Heart left ventricle (tissue), 16 donors: ENCODE measurements at regions of chr20 and their contacts with region 1.

Region 1: DNA sequence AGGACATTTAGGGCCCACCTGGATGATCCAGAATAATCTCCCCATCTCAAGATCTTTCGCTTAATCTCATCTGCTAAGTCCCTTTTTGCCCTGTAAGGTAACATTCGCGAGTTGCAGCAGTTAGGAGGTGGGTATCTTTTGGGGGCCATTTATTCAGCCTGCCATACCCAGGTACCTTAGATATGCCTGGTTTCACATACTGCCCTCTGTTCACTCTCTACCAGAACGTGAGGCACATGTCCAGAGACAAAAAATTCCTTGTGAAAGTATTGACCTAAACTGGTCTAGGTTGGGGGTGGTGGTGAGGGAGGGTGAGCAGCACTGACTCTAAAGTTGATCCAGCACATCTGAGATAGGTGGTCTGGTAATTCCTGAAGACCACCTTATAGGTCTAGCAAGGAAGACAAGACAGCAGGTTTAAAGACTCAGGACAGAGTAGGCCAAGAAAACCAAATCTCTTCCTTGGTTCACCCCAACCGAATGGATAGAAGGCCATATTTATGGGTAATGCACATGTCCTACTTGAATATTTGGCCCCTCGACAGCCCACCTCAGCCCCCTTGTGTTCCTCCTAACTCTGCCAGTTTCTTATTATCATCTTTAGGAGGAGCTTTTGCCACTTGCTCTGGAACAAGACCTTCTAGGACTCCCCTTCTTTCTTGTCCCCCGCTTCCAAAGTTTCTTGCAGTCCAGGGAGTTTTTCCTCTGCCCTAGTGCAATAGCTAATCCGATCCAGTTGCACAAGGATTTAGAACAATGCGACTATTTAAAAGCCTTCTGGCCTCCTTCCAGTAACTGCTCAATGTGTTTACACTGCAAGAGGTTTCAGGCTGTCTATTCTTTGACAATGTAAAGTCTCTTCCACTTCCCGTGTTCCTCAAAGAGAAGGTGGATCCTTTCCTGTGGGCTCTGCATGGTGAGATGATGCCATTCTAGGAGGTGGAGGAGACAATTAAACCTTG is 213.0 kb upstream of the LAMP5 start:
- DNase-seq: peak in 3 of 5 donors; percentile 18 to 34 (median 26)
- ATAC-seq: peak; percentile 73 to 88 (median 76)
- H3K4me3 ChIP-seq: no peak overlapping the region
- H3K27ac ChIP-seq: peak overlapping the region in 10 of 12 donors; percentile 1 to 54 (median 32)
- H3K4me1 ChIP-seq: peaks cover 0 to 32% (median 18%) of the 10 kb centered on the region in 12 donors
- H3K27me3 ChIP-seq: no peaks in the 10 kb centered on the region
- CTCF ChIP-seq: no peak
- POLR2A ChIP-seq: no peak

Region 2: GRCh38 chr20:9093218-9093957 is 208.0 kb before region 1 on chr20:
- intact Hi-C with region 1: no loop called
- DNase-seq: no peak
- ATAC-seq: peak in 3 of 4 donors; percentile 46 to 80 (median 52)
- H3K4me3 ChIP-seq: peak overlapping the region in 7 of 12 donors; percentile 4 to 28 (median 14)
- H3K27ac ChIP-seq: peak overlapping the region; percentile 33 to 78 (median 66)
- H3K4me1 ChIP-seq: peaks cover 0 to 71% (median 40%) of the 10 kb centered on the region in 12 donors
- H3K27me3 ChIP-seq: no peaks in the 10 kb centered on the region
- CTCF ChIP-seq: peak in 2 of 12 donors; percentile 6 to 20
- POLR2A ChIP-seq: no peak

Region 3: GRCh38 chr20:9319687-9320384 is 18.4 kb after region 1 on chr20:
- intact Hi-C with region 1: loop called in 1 of 10 experiments (anchors 2 kb)
- DNase-seq: no peak
- ATAC-seq: peak in 1 of 4 donors; percentile 6
- H3K4me3 ChIP-seq: peak overlapping the region in 6 of 12 donors; percentile 2 to 17 (median 9)
- H3K27ac ChIP-seq: peak overlapping the region in 1 of 12 donors; percentile 38
- H3K4me1 ChIP-seq: peaks cover 0 to 23% (median 11%) of the 10 kb centered on the region in 12 donors
- H3K27me3 ChIP-seq: no peaks in the 10 kb centered on the region
- CTCF ChIP-seq: no peak
- POLR2A ChIP-seq: no peak